SK-MEL-5 (cell line): ENCODE measurements at regions of chr1 and their contacts with region 1.

Region 1: DNA sequence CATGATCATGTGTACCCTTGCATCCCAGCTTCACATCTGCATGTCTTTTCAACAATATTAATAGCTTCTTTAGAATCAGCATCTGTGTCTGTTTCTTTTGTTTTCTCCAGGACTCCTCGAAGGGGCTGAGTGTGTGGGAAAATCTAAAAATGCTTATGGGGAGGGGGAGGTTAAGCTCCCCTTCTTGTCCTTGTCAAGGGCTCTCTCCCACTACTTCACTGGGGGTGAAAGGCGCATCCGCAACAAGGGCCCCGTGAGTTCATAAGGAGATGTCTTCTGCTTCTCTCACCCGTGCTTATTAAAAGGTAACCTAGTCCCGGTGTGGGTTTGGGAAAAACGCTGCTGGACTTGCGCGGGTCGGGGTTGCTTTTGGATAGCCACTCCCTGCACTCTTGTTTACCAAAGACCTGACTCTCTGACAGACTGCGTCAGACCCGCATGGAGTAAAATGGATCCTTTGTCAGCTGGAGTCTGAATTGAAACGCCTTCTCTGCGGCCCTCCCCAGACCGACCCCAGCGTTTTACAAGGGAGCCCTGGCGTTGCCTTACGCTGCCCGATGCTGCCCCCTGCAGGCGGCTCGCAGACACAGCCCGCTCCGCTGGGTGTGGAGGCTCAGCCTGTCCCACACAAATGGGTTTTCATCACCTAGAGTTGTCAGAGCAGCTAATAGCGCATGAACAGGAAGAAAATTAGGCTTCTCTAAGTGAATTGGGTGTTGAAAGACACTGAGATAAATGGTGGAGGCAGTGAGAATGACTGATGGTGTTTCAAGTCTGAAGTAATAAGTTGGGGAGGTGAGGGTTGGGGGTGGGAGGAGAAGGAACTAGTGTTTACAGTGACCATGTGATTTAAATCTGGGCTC is 53.8 kb downstream of the IER5 start:
- DNase-seq: peak; percentile 97

Region 2: GRCh38 chr1:181033799-181034451 is 108.4 kb before region 1 on chr1 and contains the start of gene MR1:
- in situ Hi-C with region 1: loop called (anchors 10 kb)
- DNase-seq: peak; percentile 93
- total RNA-seq, gene MR1: 12.4 and 14.8 TPM in 2 replicates